Esophagus muscularis mucosa (tissue), 4 donors: ENCODE measurements at regions of chr15 and their contacts with region 1.

Region 1: DNA sequence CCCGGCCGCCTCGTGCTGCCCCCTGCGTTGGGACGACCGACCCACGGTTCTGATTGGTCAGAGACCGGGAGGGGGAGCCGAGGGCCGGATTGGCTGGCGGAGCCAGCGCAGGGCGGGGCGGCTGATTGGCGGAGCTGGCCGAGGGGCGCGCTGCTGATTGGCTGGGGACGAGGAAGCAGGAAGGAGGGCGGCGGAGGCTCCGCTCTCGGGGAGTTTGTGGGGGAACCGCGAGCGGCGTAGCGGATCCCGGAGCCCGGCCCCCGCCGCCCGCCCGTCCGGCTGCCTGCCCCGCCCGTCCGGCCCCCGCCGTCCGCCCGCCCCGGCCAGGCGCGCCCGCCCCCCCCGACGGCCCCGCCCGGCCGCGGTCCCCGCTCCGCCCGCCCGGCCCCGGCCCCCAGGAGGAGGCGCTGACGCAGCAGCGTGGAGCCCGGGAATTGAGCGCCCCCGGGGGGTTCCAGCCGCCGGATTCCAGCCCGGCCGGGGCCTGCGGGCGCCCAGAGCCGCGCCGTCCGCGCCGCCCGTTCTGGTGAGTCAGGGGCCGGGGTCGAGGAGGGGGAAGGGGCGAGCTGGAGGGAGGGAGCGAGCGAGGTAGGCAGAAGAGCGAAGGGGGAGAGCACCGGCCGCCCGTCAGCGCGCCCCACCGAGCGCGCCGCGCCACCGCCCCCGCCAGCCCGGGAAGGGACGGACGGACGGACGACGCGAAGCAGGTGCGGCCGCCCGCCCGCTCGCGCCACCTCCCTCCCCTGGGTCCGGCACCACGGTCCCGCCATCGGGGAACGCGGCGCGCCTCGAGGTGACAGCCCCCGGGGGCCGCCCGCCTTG is at the start of gene BAHD1:
- DNase-seq: peak; percentile 99
- H3K4me3 ChIP-seq: peak within 1 kb of the TSS; percentile 96 to 100 (median 96)
- H3K27ac ChIP-seq: peak within 1 kb of the TSS; percentile 84 to 89 (median 86)
- H3K4me1 ChIP-seq: peaks cover 63 to 75% (median 71%) of the 10 kb centered on the region in 4 donors
- H3K27me3 ChIP-seq: peaks cover 0 to 31% (median 12%) of the 10 kb centered on the region in 4 donors
- CTCF ChIP-seq: peak in 1 of 3 experiments; percentile 8
- EP300 ChIP-seq: no peak
- POLR2A ChIP-seq: no peak
- total RNA-seq, gene BAHD1: 11.6 to 29.6 (median 22.3) TPM

Region 2: DNA sequence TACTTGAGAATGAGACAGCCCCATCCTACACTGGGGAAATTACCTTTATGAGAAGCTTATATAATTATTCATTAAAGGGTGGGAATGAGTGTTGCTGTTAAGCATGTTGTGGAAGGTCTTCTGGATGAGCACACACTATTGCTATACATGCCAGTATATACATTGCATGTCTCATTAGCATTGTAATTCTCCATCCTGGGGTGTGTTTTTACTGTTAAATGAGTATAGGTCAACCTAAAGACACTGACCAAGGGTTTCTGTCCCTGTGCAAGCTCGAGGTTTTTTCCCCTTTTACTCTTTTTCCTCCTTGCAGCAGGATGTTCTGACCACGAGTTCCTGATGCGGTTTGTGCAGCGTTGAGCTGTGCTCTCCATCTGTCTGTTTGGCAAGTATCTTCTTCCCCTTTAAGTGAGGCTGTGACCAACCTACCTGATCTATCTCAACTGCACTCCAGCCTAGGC is 42.5 kb before region 1 on chr15:
- intact Hi-C with region 1: no loop called
- DNase-seq: no peak
- H3K4me3 ChIP-seq: no peak overlapping the region
- H3K27ac ChIP-seq: no peak overlapping the region
- H3K4me1 ChIP-seq: no peaks in the 10 kb centered on the region
- H3K27me3 ChIP-seq: no peaks in the 10 kb centered on the region
- CTCF ChIP-seq: no peak
- EP300 ChIP-seq: no peak
- POLR2A ChIP-seq: no peak

Region 3: GRCh38 chr15:40506964-40507571 is 66.1 kb after region 1 on chr15:
- intact Hi-C with region 1: loop called (anchors 5 kb)
- DNase-seq: no peak
- H3K4me3 ChIP-seq: peak overlapping the region; percentile 42 to 53 (median 42)
- H3K27ac ChIP-seq: peak overlapping the region in 1 of 4 donors; percentile 17
- H3K4me1 ChIP-seq: peaks cover 3 to 25% (median 22%) of the 10 kb centered on the region in 4 donors
- H3K27me3 ChIP-seq: no peaks in the 10 kb centered on the region
- CTCF ChIP-seq: peak; percentile 67 to 81 (median 70)
- EP300 ChIP-seq: no peak
- POLR2A ChIP-seq: no peak

Region 4: DNA sequence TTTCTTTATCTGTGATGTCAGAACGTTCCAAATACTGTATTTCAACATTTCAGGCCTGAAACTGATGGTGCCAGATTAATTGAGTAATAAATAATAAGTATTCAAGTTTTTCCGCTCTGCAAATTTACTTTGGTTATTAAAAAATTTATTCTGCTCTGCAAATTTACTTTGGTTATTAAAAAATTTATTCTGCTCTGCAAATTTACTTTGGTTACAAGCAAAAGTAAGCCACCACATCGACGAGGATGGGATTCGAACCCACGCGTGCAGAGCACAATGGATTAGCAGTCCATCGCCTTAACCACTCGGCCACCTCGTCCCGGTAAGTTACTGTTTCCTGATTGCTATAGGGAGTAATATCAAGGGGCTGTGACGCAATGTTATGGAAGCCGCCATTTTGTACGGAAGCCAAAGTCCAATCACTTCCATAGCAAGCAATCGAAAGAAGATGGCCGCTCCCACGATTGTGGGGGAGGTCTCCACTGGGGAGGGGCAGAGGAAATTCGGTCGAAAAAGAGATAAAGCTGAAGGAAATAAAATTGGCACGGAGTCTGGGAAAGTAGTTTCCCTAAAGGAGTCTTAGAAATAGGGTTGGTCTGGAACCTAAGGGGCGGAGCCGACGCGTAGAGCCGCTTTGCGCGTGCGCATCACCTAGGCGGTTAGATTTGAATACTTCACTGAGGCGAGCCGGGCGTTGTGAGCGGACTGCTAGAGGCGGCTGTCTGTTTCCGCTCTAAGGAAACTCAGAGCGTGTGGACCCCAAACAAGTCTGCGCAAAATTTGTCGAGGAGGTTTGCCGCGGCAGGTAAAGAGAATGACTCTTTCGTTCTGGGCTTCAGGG is 152.9 kb after region 1 on chr15 and contains the start of gene KNL1:
- intact Hi-C with region 1: loop called (anchors 10 kb)
- DNase-seq: peak; percentile 99
- H3K4me3 ChIP-seq: peak within 1 kb of the TSS; percentile 51 to 69 (median 58)
- H3K27ac ChIP-seq: peak within 1 kb of the TSS; percentile 81 to 86 (median 84)
- H3K4me1 ChIP-seq: peaks cover 8 to 24% (median 14%) of the 10 kb centered on the region in 4 donors
- H3K27me3 ChIP-seq: peaks cover 0 to 19% (median 0%) of the 10 kb centered on the region in 4 donors
- CTCF ChIP-seq: peak in 1 of 3 experiments; percentile 8
- EP300 ChIP-seq: no peak
- POLR2A ChIP-seq: no peak
- total RNA-seq, gene KNL1: 0.06 to 0.63 (median 0.17) TPM in 3 of 4 donors, not detected in the other